AG04449 (cell line): ENCODE measurements at regions of chr10 and their contacts with region 1.

Region 1: DNA sequence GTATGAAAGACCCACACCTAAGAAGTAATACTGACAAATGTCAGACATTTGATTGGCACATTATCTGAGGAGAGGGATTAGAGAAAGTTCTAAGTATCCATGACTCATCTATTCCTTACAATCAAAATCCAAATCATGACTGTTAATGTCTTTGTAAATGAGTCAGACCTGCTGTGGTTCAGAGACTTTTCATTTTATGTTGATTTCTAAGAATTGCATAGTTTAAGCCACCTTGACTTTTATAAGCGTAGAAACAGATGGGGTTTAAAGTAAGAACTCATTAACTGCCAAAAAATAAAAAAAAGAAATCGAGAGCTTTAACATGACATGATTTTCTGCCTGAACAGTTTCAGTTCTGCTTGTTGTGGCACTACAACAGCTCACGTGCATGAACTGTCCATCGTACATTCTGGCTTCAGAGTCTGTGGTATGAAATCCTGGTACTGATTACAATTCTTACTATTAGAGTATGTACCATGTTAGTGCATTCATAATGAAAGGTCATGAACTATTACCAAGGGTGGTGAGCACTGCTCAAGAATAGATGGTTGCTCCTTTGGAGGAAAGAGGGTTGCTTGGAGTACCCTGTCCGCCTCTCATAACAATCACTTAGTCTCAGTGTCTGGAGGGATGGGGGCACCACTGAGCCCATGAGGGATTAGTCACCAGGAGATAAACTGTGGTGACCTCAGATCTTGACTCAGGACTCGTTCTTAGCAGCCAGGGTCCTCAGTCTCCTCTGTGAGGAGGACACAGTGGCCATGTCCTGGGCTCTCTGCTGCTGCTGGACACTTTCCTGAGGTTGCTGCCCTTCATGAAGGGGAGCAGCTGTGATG is 42.2 kb downstream of the ACSM6 start:
- DNase-seq: no peak
- H3K4me3 ChIP-seq: no peak overlapping the region
- CTCF ChIP-seq: no peak

Region 2: GRCh38 chr10:94916423-94916822 is 319.9 kb before region 1 on chr10:
- CTCF ChIA-PET with region 1: no interaction called
- POLR2A ChIA-PET with region 1: no interaction called
- DNase-seq: no peak
- H3K4me3 ChIP-seq: no peak overlapping the region
- CTCF ChIP-seq: no peak

Region 3: GRCh38 chr10:95056744-95057363 is 179.4 kb before region 1 on chr10:
- CTCF ChIA-PET with region 1: no interaction called
- POLR2A ChIA-PET with region 1: no interaction called
- DNase-seq: no peak
- H3K4me3 ChIP-seq: no peak overlapping the region
- CTCF ChIP-seq: no peak

Region 4: GRCh38 chr10:95077556-95077955 is 158.7 kb before region 1 on chr10:
- CTCF ChIA-PET with region 1: no interaction called
- POLR2A ChIA-PET with region 1: no interaction called
- DNase-seq: no peak
- H3K4me3 ChIP-seq: no peak overlapping the region
- CTCF ChIP-seq: no peak

Region 5: GRCh38 chr10:95168694-95169093 is 67.6 kb before region 1 on chr10:
- CTCF ChIA-PET with region 1: no interaction called
- POLR2A ChIA-PET with region 1: no interaction called
- DNase-seq: no peak
- H3K4me3 ChIP-seq: no peak overlapping the region
- CTCF ChIP-seq: no peak

Region 6: DNA sequence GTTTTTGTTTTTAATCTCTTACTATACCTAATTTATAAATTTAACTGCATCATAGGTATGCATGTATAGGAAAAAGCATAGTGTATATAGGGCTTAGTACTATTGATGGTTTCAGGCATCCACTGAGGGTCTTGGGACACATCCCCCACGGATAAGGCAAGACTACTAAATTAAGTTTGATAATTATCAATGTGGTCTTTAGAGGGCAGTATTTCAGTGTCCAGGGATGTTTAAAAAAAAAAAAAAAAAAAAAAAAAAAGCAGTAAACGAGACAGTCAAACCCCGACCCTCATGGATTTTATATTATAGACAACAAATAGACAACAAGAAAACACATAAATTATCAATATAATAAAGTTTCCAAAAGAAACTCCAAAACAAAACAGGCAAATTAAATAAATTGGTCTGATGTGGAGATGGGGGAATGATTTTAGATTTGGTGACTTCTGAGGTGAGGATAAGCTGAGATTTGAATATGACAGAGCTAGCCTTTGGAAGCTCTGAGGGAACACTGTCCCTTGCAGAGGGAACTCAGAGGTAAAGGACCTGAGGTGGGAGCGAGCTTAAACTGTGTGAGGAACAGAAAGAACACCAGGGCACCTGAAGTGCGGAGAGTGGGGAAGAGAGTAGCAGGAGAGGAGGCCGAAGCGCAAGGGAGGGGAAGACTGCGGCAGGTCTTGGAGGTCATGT is 27.4 kb before region 1 on chr10:
- CTCF ChIA-PET with region 1: interaction called, 84 read pairs
- POLR2A ChIA-PET with region 1: no interaction called
- DNase-seq: no peak
- H3K4me3 ChIP-seq: no peak overlapping the region
- CTCF ChIP-seq: peak; percentile 12